CD14-positive monocyte (primary cell): ENCODE measurements at regions of chr2 and their contacts with region 1.

Region 1: DNA sequence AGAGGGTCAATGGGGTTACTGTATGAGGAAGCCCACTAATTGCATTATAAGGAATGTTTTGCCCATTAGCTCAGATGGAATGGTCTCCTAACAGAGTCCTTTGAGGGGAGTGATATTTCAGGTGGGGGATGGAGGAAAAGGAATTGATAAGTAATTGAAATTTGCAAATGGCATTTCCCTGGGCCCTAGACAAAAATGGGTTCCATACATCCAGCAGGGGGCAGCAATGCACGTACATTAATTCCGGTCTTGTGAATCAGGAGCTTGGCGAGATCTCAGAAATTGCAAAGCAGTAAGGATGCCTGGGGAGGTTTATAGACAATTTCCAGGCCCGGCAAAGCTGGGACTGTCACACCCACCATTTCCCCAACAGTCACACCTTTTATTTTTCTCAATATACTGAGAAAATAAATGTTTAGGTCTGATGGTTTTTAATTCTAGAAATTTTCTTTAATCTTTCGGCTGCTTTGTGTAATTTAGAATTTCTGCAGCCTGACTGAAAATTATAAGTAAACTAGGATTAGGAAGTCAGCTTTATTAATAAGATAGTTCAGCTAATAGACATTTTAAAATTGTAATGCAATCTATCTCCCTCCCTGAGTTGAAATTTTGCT is 122.8 kb downstream of the LYPD1 start:
- DNase-seq: peak; percentile 38 to 60 (median 60)
- H3K4me3 ChIP-seq: no peak overlapping the region
- H3K4me3 Mint-ChIP-seq: no peak overlapping the region
- H3K27ac ChIP-seq: no peak overlapping the region
- H3K27ac Mint-ChIP-seq: peak overlapping the region in 1 of 7 donors; percentile 30
- H3K4me1 ChIP-seq: no peaks in the 10 kb centered on the region
- H3K4me1 Mint-ChIP-seq: no peaks in the 10 kb centered on the region
- H3K27me3 ChIP-seq: peaks cover 0 to 2% of the 10 kb centered on the region in 2 donors
- H3K27me3 Mint-ChIP-seq: peaks cover 0 to 1% (median under 1%) of the 10 kb centered on the region in 3 donors
- CTCF ChIP-seq: peak; percentile 80

Region 2: DNA sequence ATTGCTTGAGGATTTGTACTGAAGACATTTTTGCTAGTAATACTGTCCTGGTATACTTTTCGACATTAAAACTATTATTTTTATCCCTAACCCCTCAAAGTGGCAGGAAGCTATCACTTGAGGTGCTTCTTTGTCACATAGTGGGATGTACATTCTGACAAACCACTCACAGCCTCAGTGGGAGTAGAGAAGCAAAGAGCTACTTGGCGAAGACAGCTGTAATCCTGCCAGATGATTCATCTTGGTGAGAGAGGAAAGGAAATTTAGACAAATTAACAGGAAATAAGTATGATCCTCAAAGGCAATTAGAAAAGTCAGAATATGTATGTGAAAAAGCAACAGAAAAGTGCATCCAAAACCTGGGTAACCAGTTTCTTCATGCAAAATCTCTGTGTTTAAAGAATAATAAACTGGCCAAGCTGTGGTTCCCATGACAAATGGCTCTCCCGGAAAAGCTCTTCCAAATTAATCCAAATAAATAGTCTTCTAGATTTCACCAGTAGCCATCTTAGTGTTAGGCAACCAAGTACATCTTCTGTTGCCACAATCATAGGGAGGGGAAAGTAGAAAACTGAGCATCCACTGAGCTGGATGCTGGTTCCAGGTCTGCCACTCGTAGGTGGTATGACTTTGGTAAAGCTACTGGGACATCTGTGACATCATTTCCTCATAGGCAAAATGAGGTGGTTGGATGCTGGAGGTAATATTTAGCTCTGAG is 430.8 kb after region 1 on chr2:
- intact Hi-C with region 1: no loop called
- DNase-seq: no peak
- H3K4me3 ChIP-seq: no peak overlapping the region
- H3K4me3 Mint-ChIP-seq: no peak overlapping the region
- H3K27ac ChIP-seq: no peak overlapping the region
- H3K27ac Mint-ChIP-seq: no peak overlapping the region
- H3K4me1 ChIP-seq: no peaks in the 10 kb centered on the region
- H3K4me1 Mint-ChIP-seq: no peaks in the 10 kb centered on the region
- H3K27me3 ChIP-seq: no peaks in the 10 kb centered on the region
- H3K27me3 Mint-ChIP-seq: peaks cover 0 to 2% (median 2%) of the 10 kb centered on the region in 3 donors
- CTCF ChIP-seq: no peak

Region 3: GRCh38 chr2:133166031-133166430 is 618.9 kb after region 1 on chr2:
- intact Hi-C with region 1: loop called (anchors 5 kb)
- DNase-seq: no peak
- H3K4me3 ChIP-seq: no peak overlapping the region
- H3K4me3 Mint-ChIP-seq: no peak overlapping the region
- H3K27ac ChIP-seq: no peak overlapping the region
- H3K27ac Mint-ChIP-seq: no peak overlapping the region
- H3K4me1 ChIP-seq: no peaks in the 10 kb centered on the region
- H3K4me1 Mint-ChIP-seq: no peaks in the 10 kb centered on the region
- H3K27me3 ChIP-seq: no peaks in the 10 kb centered on the region
- H3K27me3 Mint-ChIP-seq: no peaks in the 10 kb centered on the region
- CTCF ChIP-seq: no peak

Region 4: GRCh38 chr2:133171393-133172004 is 624.3 kb after region 1 on chr2:
- intact Hi-C with region 1: loop called (anchors 5 kb)
- DNase-seq: no peak
- H3K4me3 ChIP-seq: no peak overlapping the region
- H3K4me3 Mint-ChIP-seq: no peak overlapping the region
- H3K27ac ChIP-seq: no peak overlapping the region
- H3K27ac Mint-ChIP-seq: no peak overlapping the region
- H3K4me1 ChIP-seq: no peaks in the 10 kb centered on the region
- H3K4me1 Mint-ChIP-seq: no peaks in the 10 kb centered on the region
- H3K27me3 ChIP-seq: no peaks in the 10 kb centered on the region
- H3K27me3 Mint-ChIP-seq: no peaks in the 10 kb centered on the region
- CTCF ChIP-seq: peak; percentile 31

Region 5: DNA sequence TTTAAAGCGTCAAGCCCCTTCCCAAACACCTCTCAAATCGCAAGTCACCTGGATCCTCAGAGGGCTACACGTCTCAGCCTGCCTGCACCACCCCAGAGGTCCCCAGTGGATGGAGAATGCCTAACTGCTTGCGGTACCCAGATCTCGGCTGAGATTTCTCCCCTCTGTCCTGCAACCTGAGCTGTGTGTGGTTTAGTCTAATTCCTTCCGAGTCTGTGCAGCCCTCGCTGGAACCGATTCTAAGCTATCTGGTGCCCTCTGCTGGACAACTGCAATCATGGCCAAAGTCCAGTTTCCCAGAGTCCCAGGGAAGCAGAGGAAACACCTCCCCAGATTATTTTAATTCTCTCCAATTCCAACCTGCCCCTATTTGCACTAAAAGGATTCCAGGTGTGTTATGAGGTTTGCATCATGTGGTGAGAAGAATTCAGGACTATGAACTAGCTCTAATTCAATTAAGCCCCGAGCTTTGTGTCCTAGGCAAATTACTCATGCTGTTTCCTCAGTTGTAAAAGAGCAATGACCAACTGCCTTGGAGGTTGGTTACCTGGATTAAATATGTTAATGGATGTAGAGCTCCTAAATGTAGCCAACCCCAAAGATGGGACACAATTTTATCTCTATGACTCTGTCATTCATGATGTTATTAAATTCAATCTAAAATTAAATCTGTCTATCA is 1297.2 kb after region 1 on chr2:
- intact Hi-C with region 1: loop called (anchors 2 to 5 kb)
- DNase-seq: peak; percentile 4 to 21 (median 20)
- H3K4me3 ChIP-seq: no peak overlapping the region
- H3K4me3 Mint-ChIP-seq: no peak overlapping the region
- H3K27ac ChIP-seq: no peak overlapping the region
- H3K27ac Mint-ChIP-seq: no peak overlapping the region
- H3K4me1 ChIP-seq: no peaks in the 10 kb centered on the region
- H3K4me1 Mint-ChIP-seq: no peaks in the 10 kb centered on the region
- H3K27me3 ChIP-seq: no peaks in the 10 kb centered on the region
- H3K27me3 Mint-ChIP-seq: peaks cover 4 to 11% (median 11%) of the 10 kb centered on the region in 3 donors
- CTCF ChIP-seq: peak; percentile 77